ENCODE measurements at regions of chr10 and their contacts with region 1.

Region 1: DNA sequence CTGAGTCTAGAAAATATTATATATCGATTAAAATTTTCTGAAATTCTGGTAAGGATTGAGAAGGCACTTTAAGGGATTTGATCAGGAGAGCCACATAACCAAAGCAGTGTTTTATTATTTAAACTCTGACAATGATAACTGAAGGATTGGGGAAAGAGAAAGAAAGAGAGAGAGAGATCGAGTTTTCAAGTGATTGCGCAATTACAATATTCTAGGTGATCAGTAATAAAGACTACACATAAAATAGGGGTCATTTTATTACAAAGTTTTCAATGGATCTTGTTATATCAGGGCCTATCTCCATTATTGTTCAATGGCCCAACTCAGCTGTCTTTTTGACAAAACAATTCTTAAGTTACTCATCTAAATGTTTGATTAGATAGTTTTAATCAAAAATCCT is 541.5 kb upstream of the ZWINT start:
- DNase-seq: no peak
- ATAC-seq: no peak
- H3K4me3 ChIP-seq: no peak overlapping the region
- H3K4me3 Mint-ChIP-seq: no peak overlapping the region
- H3K27ac ChIP-seq: no peak overlapping the region
- H3K27ac Mint-ChIP-seq: no peak overlapping the region
- H3K4me1 ChIP-seq: no peaks in the 10 kb centered on the region
- H3K4me1 Mint-ChIP-seq: no peaks in the 10 kb centered on the region
- H3K27me3 ChIP-seq: no peaks in the 10 kb centered on the region
- H3K27me3 Mint-ChIP-seq: no peaks in the 10 kb centered on the region
- CTCF ChIP-seq: no peak

Region 2: DNA sequence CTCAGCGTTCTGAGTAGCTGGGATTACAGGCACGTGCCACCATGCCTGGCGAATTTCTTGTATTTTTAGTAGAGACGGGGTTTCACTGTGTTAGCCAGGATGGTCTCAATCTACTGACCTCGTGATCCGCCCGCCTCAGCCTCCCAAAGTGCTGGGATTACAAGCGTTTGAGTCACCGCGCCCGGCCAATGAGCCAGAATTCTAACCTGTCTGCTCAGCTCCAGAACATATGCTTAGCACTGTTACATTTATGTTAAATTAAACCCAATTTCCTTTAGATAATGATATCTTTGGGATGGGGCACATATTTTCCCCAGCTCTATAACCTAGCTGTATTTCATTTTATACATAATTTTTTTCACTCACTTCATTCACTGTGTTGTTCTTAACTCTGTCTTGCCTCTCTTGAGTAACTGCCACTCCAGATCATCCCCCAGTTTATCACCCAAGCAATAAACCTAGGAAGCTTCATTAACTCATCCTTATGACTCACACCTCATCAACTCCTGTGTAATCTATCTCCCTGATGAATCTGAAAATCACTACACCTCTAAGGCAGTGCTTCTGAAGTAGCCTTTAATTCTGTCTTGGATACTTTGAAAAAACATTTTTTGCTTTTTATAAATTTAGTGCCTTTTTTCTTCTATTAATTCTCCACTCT is 18.2 kb after region 1 on chr10:
- CTCF ChIA-PET with region 1: no interaction called
- POLR2A ChIA-PET with region 1: no interaction called
- intact Hi-C with region 1: no loop called
- DNase-seq: no peak
- ATAC-seq: no peak
- H3K4me3 ChIP-seq: no peak overlapping the region
- H3K4me3 Mint-ChIP-seq: no peak overlapping the region
- H3K27ac ChIP-seq: no peak overlapping the region
- H3K27ac Mint-ChIP-seq: no peak overlapping the region
- H3K4me1 ChIP-seq: no peaks in the 10 kb centered on the region
- H3K4me1 Mint-ChIP-seq: no peaks in the 10 kb centered on the region
- H3K27me3 ChIP-seq: no peaks in the 10 kb centered on the region
- H3K27me3 Mint-ChIP-seq: no peaks in the 10 kb centered on the region
- CTCF ChIP-seq: no peak

Region 3: GRCh38 chr10:57142925-57143576 is 240.5 kb after region 1 on chr10:
- CTCF ChIA-PET with region 1: no interaction called
- POLR2A ChIA-PET with region 1: no interaction called
- intact Hi-C with region 1: loop called in 1 of 2 experiments (anchors 10 kb)
- DNase-seq: no peak
- ATAC-seq: no peak
- H3K4me3 ChIP-seq: no peak overlapping the region
- H3K4me3 Mint-ChIP-seq: no peak overlapping the region
- H3K27ac ChIP-seq: no peak overlapping the region
- H3K27ac Mint-ChIP-seq: no peak overlapping the region
- H3K4me1 ChIP-seq: no peaks in the 10 kb centered on the region
- H3K4me1 Mint-ChIP-seq: no peaks in the 10 kb centered on the region
- H3K27me3 ChIP-seq: no peaks in the 10 kb centered on the region
- H3K27me3 Mint-ChIP-seq: no peaks in the 10 kb centered on the region
- CTCF ChIP-seq: no peak

Measured in CD8-positive, alpha-beta T cell (primary cell).